ENCODE measurements at regions of chr17 and their contacts with region 1.

Region 1: GRCh38 chr17:42120770-42121769 is at the start of gene KAT2A:
- DNase-seq: peak; percentile 76
- ATAC-seq: peak; percentile 89
- H3K4me3 Mint-ChIP-seq: peak within 1 kb of the TSS; percentile 71
- H3K27ac Mint-ChIP-seq: peak within 1 kb of the TSS; percentile 30
- H3K4me1 Mint-ChIP-seq: peaks cover 32% of the 10 kb centered on the region
- H3K27me3 Mint-ChIP-seq: no peaks in the 10 kb centered on the region
- CTCF ChIP-seq: no peak
- total RNA-seq, gene KAT2A: 33.4 and 40.1 TPM in 2 replicates

Region 2: GRCh38 chr17:42027961-42028790 is 92.9 kb before region 1 on chr17:
- CTCF ChIA-PET with region 1: interaction called, 12 read pairs
- POLR2A ChIA-PET with region 1: interaction called, 4 read pairs
- intact Hi-C with region 1: loop called (anchors 1 kb)
- DNase-seq: no peak
- ATAC-seq: no peak
- H3K4me3 Mint-ChIP-seq: no peak overlapping the region
- H3K27ac Mint-ChIP-seq: no peak overlapping the region
- H3K4me1 Mint-ChIP-seq: peaks cover 18% of the 10 kb centered on the region
- H3K27me3 Mint-ChIP-seq: no peaks in the 10 kb centered on the region
- CTCF ChIP-seq: no peak